Left colon (tissue), 2 donors: ENCODE measurements at regions of chr4 and their contacts with region 1.

Region 1: DNA sequence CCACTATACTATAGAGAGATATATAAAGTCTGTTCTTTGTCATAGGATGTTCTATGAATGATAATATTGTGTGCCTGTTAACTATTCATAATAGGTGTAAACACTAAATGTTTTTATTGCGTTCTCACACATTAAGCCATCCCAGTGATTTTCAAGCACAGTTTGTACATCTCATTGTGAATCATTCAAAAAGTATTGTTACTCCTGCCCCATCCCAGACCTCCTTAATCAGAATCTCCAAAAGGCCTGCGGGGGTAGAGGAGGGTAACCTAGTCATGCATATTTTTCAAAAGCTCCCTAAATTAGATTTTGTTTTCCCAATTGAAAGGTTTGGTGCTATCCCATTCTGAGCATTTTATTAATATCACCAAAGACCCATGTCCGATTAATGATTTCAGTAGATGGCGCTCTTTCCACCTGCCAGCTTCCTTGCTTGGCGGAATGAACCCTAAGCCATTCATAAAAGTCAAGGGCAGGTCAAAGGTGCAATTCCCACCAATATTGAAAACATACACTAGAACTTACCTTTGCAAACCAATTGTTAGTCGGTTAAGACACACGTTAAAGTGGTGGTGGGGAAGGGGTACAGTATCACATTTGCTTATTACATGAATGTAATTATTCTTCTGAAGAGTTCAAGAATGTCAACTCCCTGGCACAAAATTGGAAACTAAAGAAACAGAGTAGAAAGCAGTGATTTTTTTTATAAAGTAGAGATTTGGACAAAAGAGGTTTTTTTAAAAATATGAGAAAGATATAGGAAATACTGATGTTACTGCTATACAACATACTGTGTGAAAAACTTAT is 5.8 kb upstream of the TET2 start:
- DNase-seq: peak in 1 of 2 donors; percentile 24
- ATAC-seq: peak; percentile 64

Region 2: DNA sequence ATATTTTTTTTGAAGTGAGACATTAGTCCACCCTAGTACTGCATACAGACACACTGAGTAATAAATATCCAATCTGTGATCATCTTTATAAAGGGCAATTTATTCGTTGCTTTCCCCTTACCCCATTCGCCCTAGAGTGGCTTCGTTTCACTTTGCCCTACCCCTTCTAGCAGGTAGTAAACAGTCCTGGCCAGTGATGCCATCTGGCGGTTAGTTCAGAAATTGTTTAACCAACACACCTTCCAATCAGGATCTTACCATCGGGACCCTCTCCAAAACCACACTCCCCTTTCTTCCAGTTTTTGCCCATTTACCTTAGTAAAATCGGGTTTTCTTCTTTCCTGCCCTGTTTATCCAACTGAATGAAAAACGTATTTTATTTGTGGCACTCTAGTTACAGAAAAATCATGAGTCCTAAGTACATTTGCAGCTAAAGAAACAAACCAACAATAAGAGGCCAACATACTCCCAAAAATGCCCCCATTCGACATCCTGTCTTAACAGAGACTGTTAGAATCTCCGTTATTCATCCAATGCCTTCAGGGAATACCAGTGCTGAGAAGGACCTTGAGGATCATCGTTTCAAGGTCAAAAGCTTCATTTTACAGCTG is 330.8 kb after region 1 on chr4:
- intact Hi-C with region 1: loop called in 1 of 2 experiments (anchors 2 kb)
- DNase-seq: peak; percentile 63 to 74
- ATAC-seq: peak; percentile 49

Region 3: DNA sequence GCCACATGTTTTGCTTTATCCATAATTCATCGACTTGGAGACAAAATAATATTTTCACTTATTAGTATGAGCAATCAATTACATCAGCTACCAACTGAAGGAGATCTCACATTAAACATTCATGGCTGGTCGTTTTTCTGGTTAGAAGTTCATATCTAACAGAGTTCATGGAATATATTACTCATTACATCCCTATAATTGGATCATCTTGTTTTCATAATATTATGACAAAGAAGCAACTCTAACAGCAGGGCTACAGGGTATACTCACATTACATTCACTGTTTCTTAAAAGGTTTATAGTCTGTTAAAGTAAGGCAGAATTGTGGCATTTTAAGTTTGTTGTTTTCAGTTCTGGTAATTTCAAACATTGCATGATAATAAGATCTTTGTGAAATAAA is 600.7 kb after region 1 on chr4:
- intact Hi-C with region 1: no loop called
- DNase-seq: no peak
- ATAC-seq: no peak